GM12878 (cell line): ENCODE measurements at regions of chr1 and their contacts with region 1.

Region 1: GRCh38 chr1:213015099-213016050 is at the start of gene ANGEL2:
- DNase-seq: peak; percentile 94
- ATAC-seq: peak; percentile 96
- H3K4me3 ChIP-seq: peak within 1 kb of the TSS; percentile 91
- H3K27ac ChIP-seq: peak within 1 kb of the TSS; percentile 92
- H3K4me1 ChIP-seq: no peaks in the 10 kb centered on the region
- H3K27me3 ChIP-seq: no peaks in the 10 kb centered on the region
- CTCF ChIP-seq: no peak
- EP300 ChIP-seq: no peak; a peak in 1 of 4 replicates
- POLR2A ChIP-seq: peak; percentile 90
- RAD21 ChIP-seq: no peak
- polyA plus RNA-seq, gene ANGEL2: 6.3 to 13.6 TPM

Region 2: GRCh38 chr1:213003256-213003655 is 12.1 kb before region 1 on chr1:
- CTCF ChIA-PET with region 1: interaction called, 5 read pairs
- POLR2A ChIA-PET with region 1: interaction called, 5 read pairs
- RAD21 ChIA-PET with region 1: no interaction called
- SMC1A ChIA-PET with region 1: interaction called, 11 read pairs
- in situ Hi-C with region 1: no loop called
- intact Hi-C with region 1: no loop called
- DNase-seq: no peak
- ATAC-seq: peak; percentile 88
- H3K4me3 ChIP-seq: no peak overlapping the region
- H3K27ac ChIP-seq: peak overlapping the region; percentile 22; the same call in 1 of the 2 replicates
- H3K4me1 ChIP-seq: no peaks in the 10 kb centered on the region
- H3K27me3 ChIP-seq: no peaks in the 10 kb centered on the region
- CTCF ChIP-seq: no peak
- EP300 ChIP-seq: no peak
- POLR2A ChIP-seq: no peak
- RAD21 ChIP-seq: no peak

Region 3: DNA sequence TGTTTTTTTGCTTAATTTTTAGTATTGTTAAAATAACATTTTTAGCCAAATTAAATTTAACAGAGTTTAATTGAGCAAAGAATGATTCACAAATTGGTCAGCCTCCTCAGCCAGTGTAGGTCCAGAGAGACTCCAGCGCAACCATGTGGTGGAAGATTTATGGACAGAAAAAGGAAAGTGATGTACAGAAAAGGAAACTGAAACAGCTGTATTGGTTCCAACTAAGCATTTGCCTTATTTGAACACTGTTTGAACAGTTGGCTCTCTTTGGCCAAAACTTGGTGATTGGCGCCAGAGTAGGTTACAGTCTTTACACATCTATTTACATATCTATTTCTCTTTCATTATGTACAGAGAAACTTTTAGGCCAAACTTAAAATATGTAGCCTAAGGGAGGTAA is 55.0 kb after region 1 on chr1:
- CTCF ChIA-PET with region 1: interaction called, 14 read pairs
- POLR2A ChIA-PET with region 1: interaction called, 3 read pairs
- RAD21 ChIA-PET with region 1: interaction called, 9 read pairs
- SMC1A ChIA-PET with region 1: interaction called, 8 read pairs
- in situ Hi-C with region 1: no loop called
- intact Hi-C with region 1: loop called (anchors 1 kb)
- DNase-seq: peak; percentile 84
- ATAC-seq: peak; percentile 92
- H3K4me3 ChIP-seq: 0 out of 2 replicates have a peak overlapping the region, but pooled peaks have one; percentile 6
- H3K27ac ChIP-seq: peak overlapping the region; percentile 73
- H3K4me1 ChIP-seq: peaks cover 10% of the 10 kb centered on the region
- H3K27me3 ChIP-seq: no peaks in the 10 kb centered on the region
- CTCF ChIP-seq: peak; percentile 33 to 47 (median 34); a peak in 4 of 6 replicates
- EP300 ChIP-seq: no peak
- POLR2A ChIP-seq: no peak
- RAD21 ChIP-seq: peak; percentile 72